ENCODE measurements at regions of chr3 and their contacts with region 1.

Region 1: DNA sequence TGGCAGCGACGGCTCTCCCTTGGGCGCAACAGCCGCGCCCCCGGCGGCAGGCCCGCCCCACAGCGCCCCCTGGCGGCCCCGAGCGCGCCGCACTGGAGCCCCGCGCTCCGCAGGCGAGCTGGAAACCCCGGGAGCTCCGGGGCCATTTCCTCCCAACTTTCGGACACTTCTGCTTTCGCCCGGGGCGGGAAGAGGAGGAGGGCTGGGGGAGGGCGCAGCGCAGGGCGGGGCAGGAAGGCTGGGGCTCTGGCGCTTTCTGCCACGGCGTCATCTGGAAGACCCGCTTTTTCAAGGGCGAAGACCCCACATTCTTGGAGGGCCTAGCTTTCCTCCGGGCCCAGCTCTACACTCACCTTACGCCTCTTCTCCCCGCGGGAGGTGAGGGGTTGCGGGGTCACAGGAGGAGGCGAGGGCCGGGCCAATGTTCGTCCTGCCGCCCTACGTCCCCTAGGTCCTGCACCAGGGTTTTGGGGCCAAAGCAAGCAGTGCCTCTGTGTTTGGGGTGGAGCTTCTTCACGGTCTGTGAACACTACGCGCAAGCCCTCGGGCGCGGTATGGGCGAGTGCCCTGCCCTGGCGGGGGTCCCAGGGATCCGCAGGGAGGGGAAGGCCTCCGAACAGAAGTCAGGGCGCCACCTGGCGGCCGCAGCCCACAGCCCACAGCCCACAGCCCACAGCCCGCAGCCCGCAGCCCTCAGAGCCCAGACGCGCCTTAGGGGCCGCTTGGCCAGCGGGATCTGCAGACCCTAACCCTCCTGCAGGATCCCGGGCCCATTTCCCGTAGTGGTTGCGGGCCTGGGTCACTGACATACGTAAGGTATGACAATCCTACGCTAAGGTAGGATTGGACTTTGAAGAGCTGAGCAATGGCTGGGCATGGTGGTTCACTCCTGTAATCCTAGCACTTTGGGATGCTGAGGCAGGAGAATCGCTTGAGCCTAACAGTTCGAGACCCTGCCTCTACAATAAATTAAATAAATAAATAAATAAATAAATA is 31.1 kb downstream of the FOXL2 start:
- DNase-seq: peak; percentile 68 to 90 (median 75)
- ATAC-seq: peak; percentile 87
- H3K4me3 ChIP-seq: peak overlapping the region; percentile 82
- H3K4me3 Mint-ChIP-seq: peak overlapping the region; percentile 87
- H3K27ac ChIP-seq: no peak overlapping the region
- H3K27ac Mint-ChIP-seq: peak overlapping the region; percentile 47
- H3K4me1 ChIP-seq: peaks cover 18% of the 10 kb centered on the region
- H3K4me1 Mint-ChIP-seq: no peaks in the 10 kb centered on the region
- H3K27me3 ChIP-seq: peaks cover 0 to 4% of the 10 kb centered on the region in 2 experiments
- H3K27me3 Mint-ChIP-seq: peaks cover 5% of the 10 kb centered on the region
- CTCF ChIP-seq: peak; percentile 85

Region 2: GRCh38 chr3:138180375-138181029 is 735.3 kb before region 1 on chr3:
- CTCF ChIA-PET with region 1: no interaction called
- POLR2A ChIA-PET with region 1: no interaction called
- intact Hi-C with region 1: loop called (anchors 5 kb)
- DNase-seq: peak in 10 of 14 experiments; percentile 4 to 67 (median 29)
- ATAC-seq: peak; percentile 88
- H3K4me3 ChIP-seq: no peak overlapping the region
- H3K4me3 Mint-ChIP-seq: no peak overlapping the region
- H3K27ac ChIP-seq: no peak overlapping the region
- H3K27ac Mint-ChIP-seq: no peak overlapping the region
- H3K4me1 ChIP-seq: no peaks in the 10 kb centered on the region
- H3K4me1 Mint-ChIP-seq: no peaks in the 10 kb centered on the region
- H3K27me3 ChIP-seq: peaks cover 0 to 8% of the 10 kb centered on the region in 2 experiments
- H3K27me3 Mint-ChIP-seq: peaks cover 4% of the 10 kb centered on the region
- CTCF ChIP-seq: peak; percentile 70

Region 3: GRCh38 chr3:138686771-138687221 is 229.0 kb before region 1 on chr3:
- CTCF ChIA-PET with region 1: interaction called, 22 read pairs
- POLR2A ChIA-PET with region 1: interaction called, 3 read pairs
- intact Hi-C with region 1: no loop called
- DNase-seq: peak in 1 of 14 experiments; percentile 37
- ATAC-seq: no peak
- H3K4me3 ChIP-seq: no peak overlapping the region
- H3K4me3 Mint-ChIP-seq: no peak overlapping the region
- H3K27ac ChIP-seq: no peak overlapping the region
- H3K27ac Mint-ChIP-seq: no peak overlapping the region
- H3K4me1 ChIP-seq: no peaks in the 10 kb centered on the region
- H3K4me1 Mint-ChIP-seq: no peaks in the 10 kb centered on the region
- H3K27me3 ChIP-seq: no peaks in the 10 kb centered on the region
- H3K27me3 Mint-ChIP-seq: no peaks in the 10 kb centered on the region
- CTCF ChIP-seq: no peak

Region 4: GRCh38 chr3:138781012-138781470 is 134.8 kb before region 1 on chr3:
- CTCF ChIA-PET with region 1: interaction called, 15 read pairs
- POLR2A ChIA-PET with region 1: no interaction called
- intact Hi-C with region 1: no loop called
- DNase-seq: peak; percentile 32 to 89 (median 48)
- ATAC-seq: peak; percentile 98
- H3K4me3 ChIP-seq: peak overlapping the region; percentile 24
- H3K4me3 Mint-ChIP-seq: peak overlapping the region; percentile 39
- H3K27ac ChIP-seq: peak overlapping the region; percentile 73 to 74
- H3K27ac Mint-ChIP-seq: peak overlapping the region; percentile 87
- H3K4me1 ChIP-seq: peaks cover 15% of the 10 kb centered on the region
- H3K4me1 Mint-ChIP-seq: peaks cover 46% of the 10 kb centered on the region
- H3K27me3 ChIP-seq: no peaks in the 10 kb centered on the region
- H3K27me3 Mint-ChIP-seq: no peaks in the 10 kb centered on the region
- CTCF ChIP-seq: no peak

Measured in CD4-positive, alpha-beta T cell (primary cell).